Posterior vena cava (tissue), 2 donors: ENCODE measurements at regions of chrX and their contacts with region 1.

Region 1: GRCh38 chrX:149493567-149494559 is 11.2 kb downstream of the IDS start:
- DNase-seq: no peak

Region 2: GRCh38 chrX:147710301-147710700 is 1783.6 kb before region 1 on chrX:
- intact Hi-C with region 1: loop called in 1 of 2 experiments (anchors 5 kb)
- DNase-seq: no peak

Region 3: GRCh38 chrX:148905400-148905799 is 588.5 kb before region 1 on chrX:
- intact Hi-C with region 1: no loop called
- DNase-seq: no peak

Region 4: GRCh38 chrX:149453030-149453429 is 40.8 kb before region 1 on chrX:
- intact Hi-C with region 1: no loop called
- DNase-seq: no peak